ENCODE measurements at regions of chr5 and their contacts with region 1.

Region 1: DNA sequence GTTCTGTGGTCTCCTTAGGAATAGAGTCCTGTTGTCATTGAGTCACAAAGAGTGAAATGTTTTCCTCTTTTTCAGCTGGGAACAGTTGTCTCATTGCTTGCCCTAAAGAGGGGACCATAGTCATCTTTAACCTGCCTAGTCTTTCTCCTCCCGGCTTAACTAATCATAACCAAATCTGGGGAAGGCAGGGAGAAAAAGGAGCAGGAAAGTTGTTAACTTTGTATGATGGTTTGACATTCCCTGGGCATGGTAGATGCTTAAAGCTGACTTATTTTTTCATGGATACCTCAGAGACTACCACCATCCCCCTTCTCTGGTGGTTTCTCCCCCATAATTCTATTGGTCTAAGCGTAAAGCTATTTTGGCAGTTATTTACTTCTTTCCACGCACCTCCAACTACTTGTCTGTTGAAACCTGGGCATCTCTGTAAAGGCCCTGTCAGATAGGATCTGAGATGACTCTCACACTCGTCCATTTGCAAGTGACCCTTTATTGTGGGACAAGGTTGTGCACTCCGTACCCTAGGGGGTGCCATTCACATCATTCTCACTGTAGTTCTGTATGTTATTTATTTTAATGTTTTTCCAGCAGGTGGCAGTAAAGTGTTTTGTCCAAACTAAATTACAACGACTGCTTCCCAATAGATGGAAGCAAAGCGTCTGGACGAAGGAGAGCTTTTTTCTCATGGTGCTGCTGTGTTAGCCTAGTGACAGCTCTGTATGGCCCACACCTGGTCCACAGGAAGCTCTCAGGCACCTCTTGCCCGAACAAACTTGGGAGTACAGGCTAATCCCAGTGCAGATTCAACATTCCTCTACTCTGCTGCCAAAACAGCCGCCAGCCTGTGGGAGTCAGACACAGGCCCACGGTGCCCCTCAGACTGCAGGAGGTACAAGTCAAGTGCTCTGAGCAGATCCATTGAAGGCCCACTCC is 3.0 kb upstream of the FAM13B start:
- DNase-seq: peak in 8 of 10 donors; percentile 27 to 92 (median 48)

Region 2: GRCh38 chr5:137778772-137779564 is 256.9 kb before region 1 on chr5:
- intact Hi-C with region 1: loop called (anchors 10 kb)
- DNase-seq: no peak

Region 3: DNA sequence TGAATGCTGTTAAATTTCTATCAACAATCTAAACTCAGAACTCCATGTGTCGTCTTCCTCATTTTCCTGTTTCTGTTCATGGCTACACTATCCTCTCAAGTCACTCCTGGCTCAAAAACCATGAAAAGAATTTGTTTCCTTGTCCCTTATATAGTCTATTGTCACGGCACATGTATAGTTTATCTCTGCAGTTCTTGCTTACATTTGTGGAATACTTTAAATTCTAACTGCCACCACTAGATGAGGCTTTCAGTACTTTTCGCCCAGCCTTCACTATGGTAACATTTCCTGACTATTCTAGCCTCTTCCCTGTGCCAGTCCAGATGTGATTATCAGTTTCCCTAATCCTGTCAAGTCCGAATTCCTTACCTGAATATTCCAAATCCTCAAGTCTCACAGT is 112.0 kb before region 1 on chr5:
- intact Hi-C with region 1: loop called (anchors 10 kb)
- DNase-seq: no peak

Region 4: GRCh38 chr5:138069068-138069600 is 33.3 kb after region 1 on chr5:
- intact Hi-C with region 1: loop called (anchors 2 kb)
- DNase-seq: no peak

Region 5: DNA sequence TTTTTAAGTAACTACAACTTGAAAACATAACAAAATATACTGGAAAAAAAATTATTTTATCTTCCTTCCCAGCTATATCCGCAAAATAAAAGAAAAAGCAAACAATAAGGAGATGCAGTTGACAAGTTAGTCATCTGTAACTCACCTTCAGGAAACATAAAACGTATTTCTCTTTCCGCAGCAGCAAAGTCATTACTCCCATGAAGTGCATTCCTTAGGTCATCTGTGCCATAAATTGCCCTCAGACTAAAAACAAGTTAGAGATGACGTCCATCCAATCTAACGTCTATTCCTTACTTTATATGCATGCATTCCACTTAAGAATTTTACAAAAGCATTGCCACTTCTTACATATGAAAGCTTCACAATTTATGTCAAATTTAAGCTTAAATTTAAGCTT is 92.5 kb after region 1 on chr5:
- intact Hi-C with region 1: loop called (anchors 1 kb)
- DNase-seq: no peak